ENCODE measurements at regions of chr17 and their contacts with region 1.

Region 1: DNA sequence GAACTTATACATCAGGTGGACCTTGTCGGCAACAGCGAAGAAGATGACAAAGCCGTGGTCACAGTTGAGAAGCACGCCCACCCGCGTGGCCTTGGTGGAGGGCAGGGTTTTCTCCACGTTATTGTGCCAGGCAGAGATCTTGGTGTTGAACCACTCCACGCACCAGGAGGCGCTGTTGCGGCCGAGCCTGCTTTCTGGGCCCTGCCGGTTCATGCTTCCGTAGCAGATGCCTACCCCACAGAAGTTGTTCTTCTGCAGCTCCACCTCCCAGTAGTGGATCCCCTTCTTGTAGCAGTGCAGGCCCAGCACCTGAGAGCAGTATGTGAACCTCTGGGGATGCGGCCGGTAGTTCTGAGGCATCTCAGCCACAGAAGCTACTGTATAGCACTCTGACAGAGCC is 22.1 kb downstream of the TRIM25 start:
- DNase-seq: peak in 13 of 14 experiments; percentile 36 to 71 (median 47)
- ATAC-seq: peak; percentile 65
- H3K4me3 ChIP-seq: no peak overlapping the region
- H3K4me3 Mint-ChIP-seq: no peak overlapping the region
- H3K27ac ChIP-seq: no peak overlapping the region
- H3K27ac Mint-ChIP-seq: no peak overlapping the region
- H3K4me1 ChIP-seq: no peaks in the 10 kb centered on the region
- H3K4me1 Mint-ChIP-seq: no peaks in the 10 kb centered on the region
- H3K27me3 ChIP-seq: no peaks in the 10 kb centered on the region
- H3K27me3 Mint-ChIP-seq: no peaks in the 10 kb centered on the region
- CTCF ChIP-seq: peak; percentile 50

Region 2: DNA sequence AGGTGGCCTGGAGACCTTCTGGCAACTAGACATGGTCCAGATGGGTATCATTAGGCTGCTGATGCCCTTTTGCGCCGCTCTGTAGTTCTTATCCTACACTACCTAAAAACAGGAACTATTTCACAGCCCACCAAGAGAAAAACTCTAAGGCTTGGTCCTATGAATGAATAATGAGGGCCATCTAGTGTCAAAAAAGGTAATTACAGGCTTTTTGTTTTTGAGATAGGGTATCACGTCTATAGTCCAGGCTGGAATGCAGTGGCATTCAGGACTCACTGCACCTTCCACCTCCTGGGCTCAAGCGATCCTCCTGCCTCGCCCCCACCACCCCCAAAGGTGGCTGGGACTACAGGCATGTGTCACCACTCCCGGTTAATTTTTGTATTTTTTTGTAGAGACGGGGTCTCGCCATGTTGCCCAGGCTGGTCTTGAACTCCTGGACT is 48.1 kb after region 1 on chr17:
- CTCF ChIA-PET with region 1: interaction called, 3 read pairs
- POLR2A ChIA-PET with region 1: no interaction called
- intact Hi-C with region 1: loop called (anchors 1 to 2 kb)
- DNase-seq: peak in 3 of 14 experiments; percentile 63 to 74 (median 73)
- ATAC-seq: peak; percentile 79
- H3K4me3 ChIP-seq: no peak overlapping the region
- H3K4me3 Mint-ChIP-seq: no peak overlapping the region
- H3K27ac ChIP-seq: no peak overlapping the region
- H3K27ac Mint-ChIP-seq: no peak overlapping the region
- H3K4me1 ChIP-seq: no peaks in the 10 kb centered on the region
- H3K4me1 Mint-ChIP-seq: no peaks in the 10 kb centered on the region
- H3K27me3 ChIP-seq: no peaks in the 10 kb centered on the region
- H3K27me3 Mint-ChIP-seq: no peaks in the 10 kb centered on the region
- CTCF ChIP-seq: peak; percentile 85

Region 3: DNA sequence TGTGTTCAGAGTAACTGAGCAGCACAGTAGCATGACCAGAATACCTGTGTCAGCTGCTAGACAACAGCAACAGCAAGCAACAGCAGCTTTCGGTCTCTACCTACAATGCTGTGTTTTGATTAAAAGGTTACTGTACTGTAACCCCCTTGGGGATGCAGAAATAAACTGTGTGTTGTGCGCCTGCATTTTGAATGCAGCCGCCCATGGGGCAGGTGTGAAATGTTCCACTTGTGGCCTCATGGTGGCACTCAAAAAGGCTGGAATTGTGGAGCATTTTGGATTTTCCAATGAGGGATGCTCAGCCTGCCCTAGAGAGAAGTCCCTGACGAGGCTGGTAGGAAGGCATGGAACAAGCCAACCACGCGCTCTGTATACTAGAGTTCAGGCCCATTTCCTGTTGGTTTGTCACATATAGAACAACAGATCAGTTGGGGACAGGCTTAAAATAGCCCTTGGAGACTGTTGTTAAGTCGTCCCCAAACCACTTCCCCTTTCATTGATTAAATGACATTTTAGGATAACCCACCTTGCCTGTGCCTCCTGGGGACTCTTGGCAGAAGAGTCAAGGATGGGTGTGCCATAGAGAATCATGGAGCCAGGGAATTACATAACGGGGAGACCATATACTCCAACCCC is 113.3 kb after region 1 on chr17:
- CTCF ChIA-PET with region 1: no interaction called
- POLR2A ChIA-PET with region 1: no interaction called
- intact Hi-C with region 1: no loop called
- DNase-seq: peak in 1 of 14 experiments; percentile 33
- ATAC-seq: no peak
- H3K4me3 ChIP-seq: no peak overlapping the region
- H3K4me3 Mint-ChIP-seq: no peak overlapping the region
- H3K27ac ChIP-seq: no peak overlapping the region
- H3K27ac Mint-ChIP-seq: no peak overlapping the region
- H3K4me1 ChIP-seq: peaks cover 4% of the 10 kb centered on the region
- H3K4me1 Mint-ChIP-seq: peaks cover 3% of the 10 kb centered on the region
- H3K27me3 ChIP-seq: no peaks in the 10 kb centered on the region
- H3K27me3 Mint-ChIP-seq: no peaks in the 10 kb centered on the region
- CTCF ChIP-seq: no peak